AG04450 (cell line): ENCODE measurements at regions of chr21 and their contacts with region 1.

Region 1: GRCh38 chr21:36052860-36053714 is 7.2 kb downstream of the SETD4 start:
- DNase-seq: no peak
- H3K4me3 ChIP-seq: no peak overlapping the region
- H3K27ac ChIP-seq: no peak overlapping the region
- H3K27me3 ChIP-seq: no peaks in the 10 kb centered on the region
- CTCF ChIP-seq: no peak

Region 2: GRCh38 chr21:35682904-35683549 is 370.1 kb before region 1 on chr21:
- CTCF ChIA-PET with region 1: no interaction called
- POLR2A ChIA-PET with region 1: no interaction called
- DNase-seq: no peak
- H3K4me3 ChIP-seq: no peak overlapping the region
- H3K27ac ChIP-seq: no peak overlapping the region
- H3K27me3 ChIP-seq: peaks cover 3% of the 10 kb centered on the region
- CTCF ChIP-seq: no peak

Region 3: DNA sequence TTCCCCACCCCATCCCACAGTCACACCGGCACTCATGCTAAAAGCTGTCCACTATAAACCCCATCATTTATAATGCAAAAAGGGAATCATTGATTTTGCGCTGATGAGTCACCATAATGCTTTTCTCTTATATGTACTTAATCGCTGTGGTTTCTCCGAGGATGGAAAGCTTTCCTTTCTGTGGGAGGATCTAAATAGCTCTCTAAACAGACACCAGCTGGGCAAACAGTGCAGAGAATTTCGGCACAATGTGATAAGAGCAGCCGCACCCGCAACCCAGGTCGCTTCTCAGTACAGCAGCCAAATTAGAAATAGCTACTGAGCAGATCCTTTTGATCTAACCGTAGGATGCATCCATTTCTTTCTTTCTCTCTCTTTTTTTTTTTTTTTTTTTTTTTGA is 78.3 kb before region 1 on chr21:
- CTCF ChIA-PET with region 1: no interaction called
- POLR2A ChIA-PET with region 1: interaction called, 14 read pairs
- DNase-seq: no peak
- H3K4me3 ChIP-seq: no peak overlapping the region
- H3K27ac ChIP-seq: no peak overlapping the region
- H3K27me3 ChIP-seq: peaks cover 13% of the 10 kb centered on the region
- CTCF ChIP-seq: no peak

Region 4: DNA sequence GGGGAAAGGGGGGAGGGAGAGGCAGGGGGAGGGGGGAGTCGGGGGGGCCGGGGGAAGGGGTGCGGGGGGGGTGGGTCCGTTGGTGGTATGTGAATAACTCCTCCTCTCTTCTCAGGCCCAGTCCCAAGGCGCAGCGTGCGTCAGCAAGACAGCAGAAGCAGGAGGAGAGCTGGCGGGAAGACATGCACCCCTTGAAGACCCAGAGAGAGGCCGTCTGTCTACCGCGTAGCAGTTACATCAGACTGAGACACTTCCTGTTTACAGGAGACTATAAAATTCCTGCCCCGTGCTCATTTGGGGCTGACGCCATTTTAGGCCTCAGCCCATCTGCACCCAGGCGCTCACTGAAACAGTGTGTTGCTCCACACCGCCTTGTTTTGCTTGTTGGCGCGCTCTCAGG is 48.1 kb before region 1 on chr21:
- CTCF ChIA-PET with region 1: no interaction called
- POLR2A ChIA-PET with region 1: no interaction called
- DNase-seq: no peak
- H3K4me3 ChIP-seq: no peak overlapping the region
- H3K27ac ChIP-seq: no peak overlapping the region
- H3K27me3 ChIP-seq: peaks cover 8% of the 10 kb centered on the region
- CTCF ChIP-seq: no peak

Region 5: DNA sequence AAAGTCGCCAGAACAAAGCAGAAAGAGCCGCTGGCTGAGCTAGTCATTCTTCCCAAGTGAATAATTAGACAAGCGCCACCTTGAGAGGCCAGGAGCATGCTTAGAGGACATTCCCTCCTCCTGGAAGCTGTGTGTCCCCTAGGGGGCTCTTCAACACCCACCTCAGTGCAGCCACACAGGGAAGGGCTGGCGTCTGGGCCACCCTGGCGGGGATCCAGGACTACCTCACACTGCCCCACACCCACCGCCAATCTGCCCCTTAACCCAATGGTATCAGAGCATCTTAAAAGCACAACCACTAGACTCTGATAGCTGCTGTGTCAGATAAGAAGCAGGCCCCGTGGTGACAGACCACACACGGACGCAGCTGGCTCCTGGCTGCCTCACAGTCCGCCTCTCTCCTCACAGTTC is 17.7 kb before region 1 on chr21:
- CTCF ChIA-PET with region 1: no interaction called
- POLR2A ChIA-PET with region 1: no interaction called
- DNase-seq: no peak
- H3K4me3 ChIP-seq: no peak overlapping the region
- H3K27ac ChIP-seq: no peak overlapping the region
- H3K27me3 ChIP-seq: no peaks in the 10 kb centered on the region
- CTCF ChIP-seq: no peak